BJ (cell line): ENCODE measurements at regions of chr14 and their contacts with region 1.

Region 1: GRCh38 chr14:96204151-96205058 is at the start of gene BDKRB2:
- DNase-seq: no peak
- H3K4me3 ChIP-seq: peak within 1 kb of the TSS; percentile 70
- H3K27me3 ChIP-seq: no peaks in the 10 kb centered on the region
- CTCF ChIP-seq: no peak
- polyA plus RNA-seq, gene BDKRB2: 21.3 and 26.8 TPM in 2 replicates

Region 2: GRCh38 chr14:96140952-96141351 is 63.5 kb before region 1 on chr14:
- CTCF ChIA-PET with region 1: no interaction called
- POLR2A ChIA-PET with region 1: interaction called, 13 read pairs
- DNase-seq: no peak
- H3K4me3 ChIP-seq: no peak overlapping the region
- H3K27me3 ChIP-seq: no peaks in the 10 kb centered on the region
- CTCF ChIP-seq: no peak

Region 3: GRCh38 chr14:96167224-96168148 is 36.9 kb before region 1 on chr14:
- CTCF ChIA-PET with region 1: no interaction called
- POLR2A ChIA-PET with region 1: interaction called, 14 read pairs
- DNase-seq: peak; percentile 88
- H3K4me3 ChIP-seq: no peak overlapping the region
- H3K27me3 ChIP-seq: no peaks in the 10 kb centered on the region; the same call in 1 of the 2 replicates
- CTCF ChIP-seq: no peak

Region 4: DNA sequence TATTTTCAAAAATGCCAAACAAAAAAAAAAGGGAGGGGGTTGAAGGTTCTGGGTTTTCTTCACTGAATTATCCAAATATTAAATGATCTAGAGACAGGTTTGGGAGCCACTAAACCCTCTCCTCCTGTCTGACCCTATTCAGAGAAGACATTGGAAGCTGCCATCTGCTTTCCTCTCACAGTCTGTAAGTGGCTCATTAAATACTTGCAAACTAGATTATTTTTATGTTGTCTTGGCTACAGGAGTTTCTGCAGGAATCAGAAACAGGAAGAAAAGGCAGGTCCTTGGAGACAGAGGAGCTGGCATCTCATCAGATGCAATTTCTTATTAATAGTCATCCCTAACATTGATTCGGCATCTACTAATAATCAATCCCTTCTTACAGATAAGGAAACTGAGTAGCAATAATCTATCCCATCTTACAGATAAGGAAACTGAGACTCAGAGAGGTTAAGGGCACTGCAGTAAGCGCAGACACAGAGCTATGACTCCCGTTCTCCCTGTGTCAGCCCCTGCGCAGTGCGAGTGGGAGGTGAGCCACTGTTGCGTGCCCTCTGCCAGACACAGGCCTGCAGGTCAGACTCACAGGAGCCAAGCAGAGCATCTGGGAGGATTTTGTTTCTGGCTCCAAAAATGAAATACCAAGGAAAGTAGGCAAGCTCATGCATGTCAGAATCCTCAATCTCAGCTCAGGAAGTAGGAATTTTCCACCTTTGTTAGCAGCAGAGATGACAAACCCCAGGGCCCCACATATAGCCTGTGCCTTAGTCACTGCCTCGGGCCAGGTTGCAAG is 11.2 kb after region 1 on chr14:
- CTCF ChIA-PET with region 1: no interaction called
- POLR2A ChIA-PET with region 1: no interaction called
- DNase-seq: no peak
- H3K4me3 ChIP-seq: no peak overlapping the region
- H3K27me3 ChIP-seq: no peaks in the 10 kb centered on the region
- CTCF ChIP-seq: no peak

Region 5: GRCh38 chr14:96251701-96252100 is 47.3 kb after region 1 on chr14:
- CTCF ChIA-PET with region 1: no interaction called
- POLR2A ChIA-PET with region 1: no interaction called
- DNase-seq: no peak
- H3K4me3 ChIP-seq: no peak overlapping the region
- H3K27me3 ChIP-seq: no peaks in the 10 kb centered on the region
- CTCF ChIP-seq: no peak